Heart left ventricle (tissue), 16 donors: ENCODE measurements at regions of chr7 and their contacts with region 1.

Region 1: GRCh38 chr7:73718905-73719805 is at the start of gene STX1A:
- DNase-seq: peak; percentile 58 to 88 (median 73)
- ATAC-seq: peak; percentile 16 to 87 (median 72)
- H3K4me3 ChIP-seq: peak within 1 kb of the TSS; percentile 58 to 96 (median 78)
- H3K27ac ChIP-seq: peak within 1 kb of the TSS in 5 of 12 donors; percentile 15 to 71 (median 48)
- H3K4me1 ChIP-seq: peaks cover 0 to 36% (median 14%) of the 10 kb centered on the region in 12 donors
- H3K27me3 ChIP-seq: peaks cover 0 to 32% (median 3%) of the 10 kb centered on the region in 9 donors
- CTCF ChIP-seq: no peak
- POLR2A ChIP-seq: peak in 1 of 2 donors; percentile 55
- total RNA-seq, gene STX1A: 1.1 to 3.6 (median 1.6) TPM

Region 2: GRCh38 chr7:73667344-73668102 is 51.6 kb before region 1 on chr7 and contains the start of gene VPS37D:
- intact Hi-C with region 1: loop called in 3 of 10 experiments (anchors 5 kb)
- DNase-seq: peak; percentile 89 to 96 (median 90)
- ATAC-seq: peak; percentile 60 to 95 (median 94)
- H3K4me3 ChIP-seq: peak within 1 kb of the TSS; percentile 34 to 97 (median 60)
- H3K27ac ChIP-seq: peak within 1 kb of the TSS in 3 of 12 donors; percentile 3 to 41 (median 19)
- H3K4me1 ChIP-seq: peaks cover 0 to 20% (median 8%) of the 10 kb centered on the region in 12 donors
- H3K27me3 ChIP-seq: no peaks in the 10 kb centered on the region
- CTCF ChIP-seq: peak; percentile 31 to 97 (median 79)
- POLR2A ChIP-seq: peak in 1 of 2 donors; percentile 19
- total RNA-seq, gene VPS37D: 1.9 to 2.9 (median 2.7) TPM

Region 3: DNA sequence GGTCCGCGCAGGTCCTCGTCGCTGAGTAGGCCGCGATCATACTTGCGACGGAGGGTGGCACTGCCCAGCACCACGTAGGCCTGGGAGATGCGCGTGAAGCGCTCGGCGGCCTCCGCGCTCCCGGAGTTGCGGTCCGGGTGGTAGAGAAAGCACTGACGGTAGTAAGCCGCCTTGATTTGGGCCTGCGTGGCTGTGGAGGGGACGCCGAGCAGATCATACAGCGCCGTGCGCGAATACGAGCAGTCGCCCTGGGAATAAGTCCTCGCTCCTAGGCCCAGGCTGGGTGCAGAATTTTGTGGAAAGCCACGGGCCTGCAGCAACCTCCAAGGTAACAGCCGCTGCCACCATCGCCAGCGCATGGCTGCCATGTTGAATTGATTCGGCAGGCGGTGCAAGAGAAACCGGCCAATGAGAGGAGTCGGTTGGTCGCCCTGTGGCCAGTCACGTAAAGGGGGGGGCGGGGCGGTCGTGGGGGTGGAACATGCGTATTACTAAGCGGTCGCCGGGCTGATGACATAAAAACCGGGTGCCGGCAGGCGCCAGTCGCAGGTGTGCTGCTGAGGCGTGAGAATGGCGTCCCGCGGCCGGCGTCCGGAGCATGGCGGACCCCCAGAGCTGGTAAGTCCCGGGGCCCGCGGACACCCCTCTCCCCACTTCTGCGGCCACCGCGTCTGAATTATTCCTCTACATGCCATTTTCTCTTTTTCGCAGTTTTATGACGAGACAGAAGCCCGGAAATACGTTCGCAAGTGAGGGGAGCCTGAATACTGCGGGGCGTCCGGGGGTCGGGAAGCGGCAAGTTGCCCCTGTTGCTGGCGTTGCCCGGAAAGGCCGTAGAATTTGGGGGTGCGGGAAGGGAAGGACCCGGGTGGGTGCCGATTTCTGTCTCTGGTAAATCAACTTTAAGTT is 35.8 kb before region 1 on chr7 and contains the starts of genes BUD23 and DNAJC30:
- intact Hi-C with region 1: loop called in 2 of 10 experiments (anchors 5 kb)
- DNase-seq: peak; percentile 97 to 99 (median 98)
- ATAC-seq: peak; percentile 95 to 98 (median 98)
- H3K4me3 ChIP-seq: peak within 1 kb of the TSS; percentile 74 to 100 (median 94)
- H3K27ac ChIP-seq: peak within 1 kb of the TSS; percentile 27 to 91 (median 84)
- H3K4me1 ChIP-seq: peaks cover 7 to 49% (median 31%) of the 10 kb centered on the region in 12 donors
- H3K27me3 ChIP-seq: no peaks in the 10 kb centered on the region
- CTCF ChIP-seq: peak in 3 of 12 donors; percentile 5 to 33 (median 23)
- POLR2A ChIP-seq: peak; percentile 22 to 77
- total RNA-seq, gene BUD23: 57.4 to 94.1 (median 68.6) TPM
- total RNA-seq, gene DNAJC30: 6.8 to 21.1 (median 15.6) TPM